ENCODE measurements at regions of chr17 and their contacts with region 1.

Region 1: GRCh38 chr17:8057691-8058114 is 18.8 kb downstream of the ALOX15B start:
- DNase-seq: peak in 7 of 9 donors; percentile 49 to 73 (median 64)
- ATAC-seq: peak; percentile 90
- H3K4me3 ChIP-seq: no peak overlapping the region
- H3K4me3 Mint-ChIP-seq: no peak overlapping the region
- H3K27ac ChIP-seq: no peak overlapping the region
- H3K27ac Mint-ChIP-seq: no peak overlapping the region
- H3K4me1 ChIP-seq: no peaks in the 10 kb centered on the region
- H3K4me1 Mint-ChIP-seq: peaks cover 0 to 20% (median 6%) of the 10 kb centered on the region in 7 donors
- H3K27me3 ChIP-seq: peaks cover 0 to 4% of the 10 kb centered on the region in 2 donors
- H3K27me3 Mint-ChIP-seq: peaks cover 34 to 62% (median 44%) of the 10 kb centered on the region in 5 donors

Region 2: GRCh38 chr17:7825206-7825990 is 232.3 kb before region 1 on chr17:
- CTCF ChIA-PET with region 1: no interaction called
- POLR2A ChIA-PET with region 1: no interaction called
- intact Hi-C with region 1: loop called in 1 of 2 experiments (anchors 1 kb)
- DNase-seq: no peak
- ATAC-seq: peak; percentile 47
- H3K4me3 ChIP-seq: no peak overlapping the region
- H3K4me3 Mint-ChIP-seq: no peak overlapping the region
- H3K27ac ChIP-seq: no peak overlapping the region
- H3K27ac Mint-ChIP-seq: peak overlapping the region in 1 of 9 donors; percentile 23
- H3K4me1 ChIP-seq: no peaks in the 10 kb centered on the region
- H3K4me1 Mint-ChIP-seq: peaks cover 0 to 5% (median 0%) of the 10 kb centered on the region in 7 donors
- H3K27me3 ChIP-seq: no peaks in the 10 kb centered on the region
- H3K27me3 Mint-ChIP-seq: peaks cover 0 to 32% (median 0%) of the 10 kb centered on the region in 5 donors

Region 3: GRCh38 chr17:7989781-7990655 is 67.7 kb before region 1 on chr17:
- CTCF ChIA-PET with region 1: interaction called, 9 read pairs
- POLR2A ChIA-PET with region 1: no interaction called
- intact Hi-C with region 1: loop called (anchors 1 kb)
- DNase-seq: peak; percentile 82 to 99 (median 91)
- ATAC-seq: peak; percentile 96
- H3K4me3 ChIP-seq: peak overlapping the region; percentile 58
- H3K4me3 Mint-ChIP-seq: peak overlapping the region; percentile 80 to 88 (median 84)
- H3K27ac ChIP-seq: peak overlapping the region; percentile 65
- H3K27ac Mint-ChIP-seq: peak overlapping the region; percentile 80 to 95 (median 90)
- H3K4me1 ChIP-seq: peaks cover 10 to 13% of the 10 kb centered on the region in 2 donors
- H3K4me1 Mint-ChIP-seq: peaks cover 17 to 26% (median 20%) of the 10 kb centered on the region in 7 donors
- H3K27me3 ChIP-seq: no peaks in the 10 kb centered on the region
- H3K27me3 Mint-ChIP-seq: peaks cover 0 to 16% (median 0%) of the 10 kb centered on the region in 5 donors

Region 4: DNA sequence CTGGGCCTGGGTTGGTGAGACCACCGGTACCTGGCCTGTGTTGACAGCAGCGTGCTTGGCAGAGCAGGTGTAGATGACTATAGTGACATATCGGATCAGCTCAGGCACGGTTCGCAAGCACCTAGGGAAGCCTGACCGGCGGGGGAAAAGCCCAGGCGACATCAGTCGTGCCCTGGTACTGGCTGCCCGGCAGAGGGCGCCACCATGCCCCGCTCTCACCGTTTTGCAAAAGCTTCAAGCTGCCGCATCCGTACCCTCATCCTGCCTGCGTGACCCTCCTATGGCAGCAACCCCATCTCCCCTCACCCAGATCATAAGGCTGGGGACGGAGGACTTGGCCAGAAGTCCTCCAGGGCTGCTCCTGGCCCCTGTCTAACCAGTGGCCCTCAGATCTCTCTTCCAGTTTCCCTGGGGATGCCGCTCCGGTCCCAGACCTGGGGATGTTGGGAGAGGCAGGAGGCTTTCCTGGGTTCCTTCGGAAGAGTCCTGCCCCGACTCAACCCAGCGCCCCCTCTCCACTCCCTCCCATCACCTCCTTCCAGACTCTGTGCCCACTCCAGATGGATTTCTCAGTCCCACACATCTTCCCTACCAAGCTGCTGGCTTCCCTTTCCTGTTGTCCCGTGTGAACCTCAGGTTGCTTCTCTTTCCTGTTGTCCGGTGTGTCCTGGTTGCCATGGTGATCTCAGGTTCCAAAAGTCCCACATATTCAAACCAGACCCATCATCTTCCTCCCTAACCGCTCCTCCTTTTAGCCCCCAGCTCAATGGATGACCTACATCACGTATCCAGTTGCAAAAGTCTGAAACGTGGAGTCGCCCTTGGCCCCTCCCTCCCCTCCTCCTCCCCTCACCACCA is 16.2 kb after region 1 on chr17:
- CTCF ChIA-PET with region 1: interaction called, 122 read pairs
- POLR2A ChIA-PET with region 1: interaction called, 4 read pairs
- intact Hi-C with region 1: loop called (anchors 1 kb)
- DNase-seq: peak; percentile 64 to 86 (median 82)
- ATAC-seq: peak; percentile 91
- H3K4me3 ChIP-seq: peak overlapping the region; percentile 49
- H3K4me3 Mint-ChIP-seq: peak overlapping the region; percentile 84 to 95 (median 88)
- H3K27ac ChIP-seq: no peak overlapping the region
- H3K27ac Mint-ChIP-seq: peak overlapping the region in 7 of 9 donors; percentile 28 to 88 (median 53)
- H3K4me1 ChIP-seq: peaks cover 7 to 24% of the 10 kb centered on the region in 2 donors
- H3K4me1 Mint-ChIP-seq: peaks cover 7 to 28% (median 25%) of the 10 kb centered on the region in 7 donors
- H3K27me3 ChIP-seq: peaks cover 7 to 9% of the 10 kb centered on the region in 2 donors
- H3K27me3 Mint-ChIP-seq: peaks cover 20 to 61% (median 29%) of the 10 kb centered on the region in 5 donors

Region 5: DNA sequence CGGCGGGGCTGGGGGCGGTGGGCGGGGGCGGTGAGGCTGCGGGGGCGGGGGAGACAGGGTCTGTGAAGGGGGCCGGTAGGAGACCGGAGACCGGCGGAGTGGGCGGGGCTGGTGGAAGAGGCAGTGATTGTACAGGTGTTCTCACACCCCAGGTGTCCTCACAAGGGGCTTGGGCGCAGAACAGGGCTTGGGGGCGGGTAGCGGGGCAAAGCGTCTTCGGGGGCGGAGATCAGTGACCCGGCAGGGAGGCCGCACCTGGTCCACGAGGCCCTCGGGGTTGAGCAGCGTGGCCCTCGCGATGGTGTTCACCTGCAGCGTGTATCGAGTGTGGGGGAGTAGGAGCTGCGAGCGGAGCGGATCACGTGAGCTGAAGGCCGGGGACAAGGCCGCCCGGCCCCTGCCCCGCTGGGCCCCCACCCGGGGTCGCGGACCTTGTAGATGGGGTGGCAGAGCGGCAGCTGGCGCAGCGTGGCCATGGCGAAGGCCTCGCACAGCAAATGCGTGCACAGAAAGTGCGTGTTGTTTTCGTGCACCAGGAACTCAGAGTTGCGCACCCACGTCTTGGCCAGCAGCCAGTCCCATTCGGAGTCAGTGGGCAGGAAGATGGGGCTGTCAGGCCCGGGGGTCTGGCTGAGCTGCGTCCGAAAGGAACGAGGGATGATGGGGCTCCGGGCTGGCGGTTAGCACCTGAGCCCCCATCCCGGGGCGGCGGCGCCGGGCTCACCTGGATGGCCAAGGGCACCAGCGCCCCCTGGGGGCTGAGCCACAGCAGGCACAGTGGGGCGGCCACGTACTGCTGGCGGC is 52.2 kb after region 1 on chr17:
- CTCF ChIA-PET with region 1: interaction called, 66 read pairs
- POLR2A ChIA-PET with region 1: interaction called, 4 read pairs
- intact Hi-C with region 1: loop called (anchors 1 kb)
- DNase-seq: peak; percentile 74 to 94 (median 84)
- ATAC-seq: peak; percentile 98
- H3K4me3 ChIP-seq: peak overlapping the region; percentile 73
- H3K4me3 Mint-ChIP-seq: peak overlapping the region; percentile 43 to 81 (median 70)
- H3K27ac ChIP-seq: peak overlapping the region; percentile 42
- H3K27ac Mint-ChIP-seq: peak overlapping the region in 1 of 9 donors; percentile 68
- H3K4me1 ChIP-seq: peaks cover 0 to 4% of the 10 kb centered on the region in 2 donors
- H3K4me1 Mint-ChIP-seq: peaks cover 0 to 8% (median 5%) of the 10 kb centered on the region in 7 donors
- H3K27me3 ChIP-seq: peaks cover 0 to 7% of the 10 kb centered on the region in 2 donors
- H3K27me3 Mint-ChIP-seq: peaks cover 10 to 43% (median 23%) of the 10 kb centered on the region in 5 donors

Region 6: DNA sequence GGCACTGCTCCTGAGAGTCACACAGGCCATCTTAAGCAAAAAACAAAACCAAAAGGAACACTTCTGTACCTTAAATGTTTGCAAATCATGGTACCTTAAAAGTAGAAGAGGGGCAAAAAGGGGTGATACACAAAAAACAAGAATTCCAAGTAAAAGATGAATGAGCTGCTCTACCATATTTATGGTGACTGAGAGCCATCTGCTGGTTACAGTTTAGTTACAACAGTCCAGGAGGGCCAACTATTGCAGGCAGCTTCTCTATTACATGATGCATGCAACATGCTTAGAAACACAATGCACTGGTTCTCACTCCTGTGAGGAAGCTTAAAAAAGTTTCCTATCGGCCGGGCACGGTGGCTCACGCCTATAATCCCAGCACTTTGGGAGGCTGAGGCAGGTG is 1464.4 kb after region 1 on chr17:
- CTCF ChIA-PET with region 1: no interaction called
- POLR2A ChIA-PET with region 1: no interaction called
- intact Hi-C with region 1: loop called in 1 of 2 experiments (anchors 10 kb)
- DNase-seq: peak in 3 of 9 donors; percentile 11 to 16 (median 11)
- ATAC-seq: peak; percentile 34
- H3K4me3 ChIP-seq: no peak overlapping the region
- H3K4me3 Mint-ChIP-seq: no peak overlapping the region
- H3K27ac ChIP-seq: no peak overlapping the region
- H3K27ac Mint-ChIP-seq: no peak overlapping the region
- H3K4me1 ChIP-seq: peaks cover 0 to 8% of the 10 kb centered on the region in 2 donors
- H3K4me1 Mint-ChIP-seq: peaks cover 13 to 30% (median 23%) of the 10 kb centered on the region in 7 donors
- H3K27me3 ChIP-seq: no peaks in the 10 kb centered on the region
- H3K27me3 Mint-ChIP-seq: no peaks in the 10 kb centered on the region

Measured in naive thymus-derived CD4-positive, alpha-beta T cell (primary cell).